Caco-2 (cell line): ENCODE measurements at regions of chr14 and their contacts with region 1.

Region 1: DNA sequence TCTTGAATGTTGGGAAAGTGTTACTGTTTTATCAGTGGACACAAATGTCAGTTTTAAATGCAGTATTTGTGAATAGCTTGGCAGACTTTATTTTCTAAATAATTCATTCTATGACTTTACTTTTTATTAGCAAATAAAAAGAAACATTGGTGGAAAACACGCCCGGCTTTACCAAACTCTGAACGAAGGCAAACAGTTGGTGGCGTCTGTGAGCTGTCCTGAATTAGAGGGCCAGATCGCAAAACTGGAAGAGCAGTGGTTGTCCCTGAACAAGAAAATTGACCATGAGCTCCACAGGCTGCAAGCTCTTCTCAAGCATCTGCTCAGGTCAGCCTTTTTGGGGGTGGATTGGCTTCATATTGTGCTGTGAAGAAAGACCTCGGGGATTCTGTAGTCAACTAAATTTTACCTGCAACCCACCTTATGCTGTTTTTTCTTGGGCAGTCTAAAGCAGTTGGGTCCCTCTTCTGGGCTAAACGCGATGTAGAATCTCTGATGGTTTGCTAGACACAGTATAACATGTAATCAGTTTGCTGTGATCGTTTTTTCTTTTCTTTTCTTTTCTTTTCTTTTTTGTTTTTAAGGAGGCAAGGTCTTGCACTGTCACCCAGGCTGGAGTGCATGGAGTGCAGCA is 156.4 kb downstream of the ESR2 start:
- DNase-seq: peak in 1 of 2 experiments; percentile 24
- H3K4me3 ChIP-seq: no peak overlapping the region
- H3K4me3 Mint-ChIP-seq: no peak overlapping the region
- H3K27ac Mint-ChIP-seq: no peak overlapping the region
- H3K4me1 ChIP-seq: no peaks in the 10 kb centered on the region
- H3K4me1 Mint-ChIP-seq: no peaks in the 10 kb centered on the region
- H3K27me3 ChIP-seq: no peaks in the 10 kb centered on the region
- H3K27me3 Mint-ChIP-seq: no peaks in the 10 kb centered on the region
- CTCF ChIP-seq: peak; percentile 21 to 32

Region 2: DNA sequence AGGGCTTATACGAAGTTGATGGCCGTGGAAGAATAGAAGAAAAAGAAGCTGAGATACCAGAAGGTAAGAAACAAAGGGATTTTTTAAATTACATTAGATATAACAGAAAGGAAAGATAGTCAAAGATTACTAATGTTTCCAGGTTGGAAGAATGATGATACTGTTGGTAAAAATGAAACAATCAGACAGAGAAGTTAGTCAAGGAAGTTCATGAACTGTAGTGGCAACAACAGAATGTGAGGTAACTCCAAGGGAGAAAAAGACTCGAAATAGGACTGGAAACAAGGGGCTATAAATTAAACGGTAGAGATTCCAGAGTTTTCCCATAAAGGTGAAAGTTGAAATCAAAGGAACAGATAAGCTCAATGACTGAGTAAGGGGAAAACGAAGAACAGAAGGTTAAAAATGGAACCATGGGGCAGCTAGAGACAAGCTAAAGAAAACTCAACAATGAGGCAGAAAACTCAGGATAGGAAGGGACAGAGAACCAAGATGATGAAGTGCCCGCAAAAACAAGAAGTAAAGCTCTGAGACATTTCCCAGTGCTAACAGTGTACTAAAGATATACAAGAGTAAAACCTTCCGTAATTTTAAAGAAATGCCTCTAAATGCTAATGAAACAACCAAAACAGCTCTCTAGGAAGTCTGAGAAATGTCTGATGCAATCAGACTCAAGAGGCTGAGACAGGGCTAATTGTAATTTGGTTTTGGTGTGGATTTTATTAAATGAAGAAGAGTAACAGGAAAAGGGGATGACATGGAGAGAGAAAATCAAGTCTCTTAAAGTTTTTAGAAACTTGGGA is 664.6 kb before region 1 on chr14:
- CTCF ChIA-PET with region 1: interaction called, 11 read pairs
- POLR2A ChIA-PET with region 1: no interaction called
- intact Hi-C with region 1: no loop called
- DNase-seq: no peak
- H3K4me3 ChIP-seq: no peak overlapping the region
- H3K4me3 Mint-ChIP-seq: no peak overlapping the region
- H3K27ac Mint-ChIP-seq: no peak overlapping the region
- H3K4me1 ChIP-seq: peaks cover 11% of the 10 kb centered on the region; the same call in 1 of the 2 replicates
- H3K4me1 Mint-ChIP-seq: peaks cover 8% of the 10 kb centered on the region
- H3K27me3 ChIP-seq: no peaks in the 10 kb centered on the region
- H3K27me3 Mint-ChIP-seq: no peaks in the 10 kb centered on the region
- CTCF ChIP-seq: no peak

Region 3: DNA sequence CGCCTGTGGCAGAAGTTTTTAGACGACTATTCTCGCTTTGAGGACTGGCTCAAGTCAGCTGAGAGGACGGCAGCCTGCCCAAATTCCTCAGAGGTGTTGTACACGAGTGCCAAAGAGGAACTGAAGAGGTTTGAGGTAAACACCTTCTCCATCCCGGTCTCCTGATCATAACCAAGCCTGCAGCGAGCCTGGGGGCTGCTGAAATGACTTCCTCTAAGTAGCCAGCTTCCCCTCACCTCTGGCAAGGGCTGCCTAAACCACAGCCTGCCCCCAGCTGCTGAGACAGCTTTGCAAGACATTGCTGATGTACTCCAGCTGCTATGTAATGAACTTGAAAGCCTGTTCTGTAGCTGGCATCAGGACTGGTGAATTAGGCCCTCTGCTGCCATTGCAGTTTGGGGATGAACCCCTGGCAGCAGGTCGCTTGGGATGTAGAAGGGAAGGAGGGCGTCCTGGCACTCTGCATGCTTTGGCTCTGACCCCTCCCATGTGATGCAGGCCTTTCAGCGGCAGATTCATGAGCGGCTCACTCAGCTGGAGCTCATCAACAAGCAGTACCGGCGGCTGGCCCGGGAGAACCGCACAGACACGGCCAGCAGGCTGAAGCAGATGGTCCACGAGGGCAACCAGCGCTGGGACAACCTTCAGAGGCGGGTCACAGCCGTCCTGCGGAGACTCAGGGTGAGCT is 71.8 kb after region 1 on chr14:
- CTCF ChIA-PET with region 1: no interaction called
- POLR2A ChIA-PET with region 1: no interaction called
- intact Hi-C with region 1: no loop called
- DNase-seq: no peak
- H3K4me3 ChIP-seq: no peak overlapping the region
- H3K4me3 Mint-ChIP-seq: no peak overlapping the region
- H3K27ac Mint-ChIP-seq: no peak overlapping the region
- H3K4me1 ChIP-seq: peaks cover 26% of the 10 kb centered on the region
- H3K4me1 Mint-ChIP-seq: peaks cover 19% of the 10 kb centered on the region
- H3K27me3 ChIP-seq: no peaks in the 10 kb centered on the region
- H3K27me3 Mint-ChIP-seq: no peaks in the 10 kb centered on the region
- CTCF ChIP-seq: no peak

Region 4: DNA sequence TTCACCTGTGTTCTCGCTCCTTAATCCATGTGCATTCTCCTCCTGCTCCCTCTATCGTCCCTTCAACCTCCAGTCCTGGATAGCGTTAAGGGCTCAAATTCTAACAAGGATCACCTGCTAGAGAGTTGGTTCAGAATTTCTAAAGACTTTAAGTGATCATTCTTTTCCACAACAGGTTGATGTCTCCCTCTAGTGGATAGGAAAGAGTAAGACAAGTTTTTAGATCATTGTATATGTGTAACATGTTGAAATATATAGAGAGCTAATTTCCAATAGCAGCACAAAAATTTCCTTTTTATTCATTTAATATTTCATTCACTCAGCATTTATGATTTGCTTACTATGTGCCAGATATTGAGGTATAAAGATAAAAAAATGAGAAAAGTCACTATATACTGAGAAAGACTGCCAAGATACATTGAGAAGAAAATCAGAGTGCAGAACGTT is 165.7 kb after region 1 on chr14:
- CTCF ChIA-PET with region 1: interaction called, 12 read pairs
- POLR2A ChIA-PET with region 1: no interaction called
- intact Hi-C with region 1: no loop called
- DNase-seq: peak in 1 of 2 experiments; percentile 56
- H3K4me3 ChIP-seq: no peak overlapping the region
- H3K4me3 Mint-ChIP-seq: no peak overlapping the region
- H3K27ac Mint-ChIP-seq: no peak overlapping the region
- H3K4me1 ChIP-seq: no peaks in the 10 kb centered on the region
- H3K4me1 Mint-ChIP-seq: no peaks in the 10 kb centered on the region
- H3K27me3 ChIP-seq: no peaks in the 10 kb centered on the region
- H3K27me3 Mint-ChIP-seq: peaks cover 3% of the 10 kb centered on the region
- CTCF ChIP-seq: peak; percentile 66 to 70